Lower leg skin (tissue), 4 donors: ENCODE measurements at regions of chr19 and their contacts with region 1.

Region 1: DNA sequence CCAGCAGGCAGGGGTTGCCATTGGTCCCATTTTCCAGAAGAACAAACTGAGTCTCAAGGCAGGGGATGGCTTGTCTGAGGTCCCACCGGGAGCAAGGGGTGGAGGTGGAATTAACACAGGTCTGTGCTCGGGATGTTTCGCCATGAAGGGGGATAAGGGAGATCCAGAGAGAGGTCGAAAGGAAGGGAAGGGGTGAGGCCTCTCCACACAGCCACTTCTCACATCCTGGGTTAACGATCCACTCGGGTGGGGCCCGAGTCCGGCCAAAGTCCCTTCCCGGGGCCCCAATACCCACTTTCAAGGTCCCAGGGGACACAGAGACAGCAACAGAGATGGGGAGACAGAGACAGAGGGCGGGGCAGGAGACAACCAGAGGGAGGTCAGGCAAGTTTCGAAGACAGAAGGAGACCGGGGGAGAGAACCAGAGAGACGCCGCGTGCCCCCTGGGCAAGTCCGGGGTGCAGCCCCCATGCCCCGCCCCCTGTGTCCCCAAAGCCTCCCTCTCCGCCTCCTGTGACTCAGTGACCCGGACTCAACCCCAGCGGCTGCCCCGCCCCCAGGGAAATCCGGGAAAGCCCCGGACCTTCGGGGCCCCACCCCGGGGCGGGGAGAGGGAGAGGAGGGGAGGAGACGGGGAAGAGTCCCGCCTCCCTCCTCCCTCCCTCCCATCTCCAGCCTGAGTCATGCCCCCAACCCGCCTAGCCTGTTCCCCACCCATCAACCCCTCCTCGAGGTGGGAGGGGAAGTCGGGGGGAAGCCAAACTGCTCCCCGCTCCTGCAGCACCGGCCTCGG is 1.4 kb upstream of the BCL3 start:
- DNase-seq: peak; percentile 94 to 99
- H3K4me3 ChIP-seq: no peak overlapping the region
- CTCF ChIP-seq: no peak
- POLR2A ChIP-seq: no peak

Region 2: DNA sequence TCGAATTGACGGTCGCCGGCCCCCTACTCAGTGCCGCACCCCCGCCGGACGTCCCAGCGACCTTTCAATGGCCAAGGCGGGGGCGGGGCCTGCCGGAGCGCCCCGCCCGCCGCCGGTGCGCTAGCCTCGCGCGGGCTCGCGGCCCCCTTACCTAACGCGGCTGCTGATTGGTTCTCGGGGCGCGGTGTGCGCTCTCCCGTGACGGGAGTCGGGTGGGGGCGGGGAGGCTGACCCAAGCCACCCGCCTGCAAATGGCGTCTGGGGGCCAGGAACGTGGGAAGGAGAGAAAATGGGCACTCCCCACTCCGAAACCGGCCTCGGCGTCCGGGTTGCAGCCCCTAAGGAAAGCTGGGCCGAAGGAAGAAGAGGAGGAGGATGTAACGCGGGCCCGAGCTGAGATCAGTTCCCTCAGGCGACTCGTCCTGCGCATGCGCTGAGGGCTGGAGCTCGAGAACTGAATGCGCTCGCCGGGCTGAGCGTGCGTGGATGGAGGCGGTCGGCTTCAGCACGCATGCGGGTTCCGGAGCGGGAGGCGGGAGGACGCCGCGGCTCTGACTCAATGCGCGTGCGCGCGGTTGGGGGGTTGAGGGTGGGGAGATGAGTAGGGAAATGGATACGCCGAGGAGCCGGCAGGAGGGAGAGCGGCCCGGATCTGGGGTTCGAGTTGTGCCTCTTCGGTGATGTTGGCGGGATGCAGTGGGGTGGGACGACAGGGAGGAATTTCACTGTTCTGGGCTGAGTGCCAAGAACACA is 992.5 kb before region 1 on chr19 and contains the start of gene SMG9:
- intact Hi-C with region 1: loop called (anchors 5 kb)
- DNase-seq: peak; percentile 96 to 99
- H3K4me3 ChIP-seq: peak within 1 kb of the TSS; percentile 30
- CTCF ChIP-seq: peak in 1 of 3 donors; percentile 21
- POLR2A ChIP-seq: peak in 1 of 2 donors; percentile 39
- total RNA-seq, gene SMG9: 18.0 to 27.6 (median 23.5) TPM

Region 3: DNA sequence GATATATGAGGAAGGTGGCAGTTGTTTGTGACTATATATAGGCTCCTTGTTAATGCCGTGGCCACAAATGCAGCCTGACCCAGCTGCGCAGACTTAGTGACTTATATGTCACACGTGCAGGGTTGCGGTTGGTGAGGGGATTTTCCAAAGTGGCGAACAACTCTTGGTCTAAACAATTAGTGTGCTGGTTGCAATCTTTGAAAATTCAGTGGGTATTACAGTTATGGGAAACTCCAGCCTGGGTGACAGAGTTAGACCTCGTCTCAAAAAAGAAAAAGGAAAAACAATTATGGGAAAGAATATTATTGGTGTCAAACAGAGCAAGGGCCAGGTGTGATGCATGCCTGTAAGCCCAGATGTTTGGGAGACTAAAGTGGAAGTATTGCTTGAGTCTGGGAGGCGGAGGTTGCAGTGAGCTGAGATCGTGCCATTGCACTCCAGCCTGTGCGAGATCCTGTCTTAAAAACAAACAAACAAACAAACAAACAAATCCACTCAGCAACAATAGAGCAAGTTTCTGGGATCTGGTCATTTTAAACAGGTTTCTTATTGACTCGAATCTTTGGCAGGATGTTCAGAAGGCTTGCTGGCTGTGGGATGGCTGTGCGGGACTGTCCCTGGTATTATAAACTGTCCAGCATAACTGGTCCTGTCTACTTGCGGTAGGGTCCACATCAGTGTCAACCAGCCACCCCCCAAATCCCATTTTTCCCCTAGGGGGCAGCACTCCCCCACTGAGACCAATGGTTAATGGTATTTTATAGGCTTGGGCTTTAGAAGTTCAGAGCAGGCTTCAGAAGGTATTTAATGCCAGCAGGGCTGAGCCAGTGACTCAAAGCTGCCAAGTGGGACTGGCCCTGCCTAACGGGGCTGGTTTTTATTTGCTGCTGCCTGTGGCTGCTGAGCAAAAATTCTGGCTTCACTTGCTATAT is 269.5 kb after region 1 on chr19:
- intact Hi-C with region 1: no loop called
- DNase-seq: peak; percentile 39 to 91
- H3K4me3 ChIP-seq: no peak overlapping the region
- CTCF ChIP-seq: no peak
- POLR2A ChIP-seq: no peak